Aorta (tissue), 5 donors: ENCODE measurements at regions of chr19 and their contacts with region 1.

Region 1: GRCh38 chr19:27974082-27974513 is 1238.9 kb downstream of the UQCRFS1 start:
- DNase-seq: no peak
- ATAC-seq: no peak
- H3K4me3 ChIP-seq: no peak overlapping the region
- H3K27ac ChIP-seq: no peak overlapping the region
- H3K4me1 ChIP-seq: no peaks in the 10 kb centered on the region
- H3K27me3 ChIP-seq: no peaks in the 10 kb centered on the region

Region 2: GRCh38 chr19:28289295-28290063 is 315.4 kb after region 1 on chr19:
- intact Hi-C with region 1: no loop called
- DNase-seq: no peak
- ATAC-seq: no peak
- H3K4me3 ChIP-seq: no peak overlapping the region
- H3K27ac ChIP-seq: no peak overlapping the region
- H3K4me1 ChIP-seq: no peaks in the 10 kb centered on the region
- H3K27me3 ChIP-seq: no peaks in the 10 kb centered on the region

Region 3: DNA sequence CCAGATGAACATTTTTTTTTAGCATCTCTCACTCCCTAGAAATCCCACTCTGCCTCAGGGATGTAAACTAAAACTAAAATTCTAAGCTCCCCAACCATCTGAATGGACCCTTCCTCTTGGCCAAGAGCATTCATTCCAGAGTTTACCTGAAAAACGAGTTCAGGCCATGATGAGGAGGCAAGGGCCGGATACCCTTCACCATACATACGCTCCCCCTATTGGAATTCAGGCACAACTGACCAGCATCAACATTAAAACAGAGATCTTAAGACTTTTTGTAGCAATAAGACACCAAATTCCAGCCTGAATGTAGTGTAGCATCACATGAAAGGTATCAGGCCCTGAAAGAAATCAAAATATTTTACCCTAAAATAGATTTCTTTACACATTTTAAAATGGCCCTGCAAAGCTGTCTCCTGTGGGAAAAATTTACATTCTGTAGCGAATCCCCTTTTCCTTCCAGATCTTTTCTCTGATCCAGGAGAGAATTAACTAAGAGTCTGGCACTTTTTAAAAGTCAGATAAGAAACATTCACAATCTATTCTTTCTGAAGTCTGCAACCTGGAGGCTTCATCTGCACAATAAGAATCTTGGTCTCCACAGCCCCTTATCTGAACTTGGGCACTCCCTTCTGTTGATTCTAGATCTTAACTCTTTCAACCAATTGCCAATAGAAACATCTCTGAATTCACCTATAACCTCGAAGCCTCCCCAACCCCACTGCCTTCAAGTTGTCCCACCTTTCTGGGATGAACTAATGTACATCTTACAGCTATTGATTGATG is 350.4 kb after region 1 on chr19:
- intact Hi-C with region 1: loop called in 1 of 2 experiments (anchors 10 kb)
- DNase-seq: no peak
- ATAC-seq: no peak
- H3K4me3 ChIP-seq: no peak overlapping the region
- H3K27ac ChIP-seq: no peak overlapping the region
- H3K4me1 ChIP-seq: no peaks in the 10 kb centered on the region
- H3K27me3 ChIP-seq: no peaks in the 10 kb centered on the region